ENCODE measurements at regions of chr4 and their contacts with region 1.

Region 1: GRCh38 chr4:184649026-184649970 is at the starts of genes CASP3 and PRIMPOL:
- DNase-seq: peak; percentile 93 to 95
- ATAC-seq: peak; percentile 80 to 86
- H3K4me3 ChIP-seq: peak within 1 kb of the TSS; percentile 66 to 98 (median 82)
- H3K27ac ChIP-seq: peak within 1 kb of the TSS; percentile 89 to 100 (median 98)
- H3K4me1 ChIP-seq: peaks cover 46 to 54% of the 10 kb centered on the region in 2 donors
- H3K27me3 ChIP-seq: no peaks in the 10 kb centered on the region
- CTCF ChIP-seq: peak in 2 of 5 experiments; percentile 29 to 45
- POLR2A ChIP-seq: peak; percentile 86 to 92
- total RNA-seq, gene CASP3: 16.9 to 25.5 (median 20.8) TPM
- total RNA-seq, gene PRIMPOL: 5.9 to 11.1 (median 10.7) TPM

Region 2: GRCh38 chr4:184237612-184238011 is 411.7 kb before region 1 on chr4:
- in situ Hi-C with region 1: no loop called
- intact Hi-C with region 1: no loop called
- DNase-seq: no peak
- ATAC-seq: no peak
- H3K4me3 ChIP-seq: no peak overlapping the region
- H3K27ac ChIP-seq: no peak overlapping the region
- H3K4me1 ChIP-seq: no peaks in the 10 kb centered on the region
- H3K27me3 ChIP-seq: peaks cover 0 to 2% (median 0%) of the 10 kb centered on the region in 3 donors
- CTCF ChIP-seq: no peak
- POLR2A ChIP-seq: no peak

Region 3: DNA sequence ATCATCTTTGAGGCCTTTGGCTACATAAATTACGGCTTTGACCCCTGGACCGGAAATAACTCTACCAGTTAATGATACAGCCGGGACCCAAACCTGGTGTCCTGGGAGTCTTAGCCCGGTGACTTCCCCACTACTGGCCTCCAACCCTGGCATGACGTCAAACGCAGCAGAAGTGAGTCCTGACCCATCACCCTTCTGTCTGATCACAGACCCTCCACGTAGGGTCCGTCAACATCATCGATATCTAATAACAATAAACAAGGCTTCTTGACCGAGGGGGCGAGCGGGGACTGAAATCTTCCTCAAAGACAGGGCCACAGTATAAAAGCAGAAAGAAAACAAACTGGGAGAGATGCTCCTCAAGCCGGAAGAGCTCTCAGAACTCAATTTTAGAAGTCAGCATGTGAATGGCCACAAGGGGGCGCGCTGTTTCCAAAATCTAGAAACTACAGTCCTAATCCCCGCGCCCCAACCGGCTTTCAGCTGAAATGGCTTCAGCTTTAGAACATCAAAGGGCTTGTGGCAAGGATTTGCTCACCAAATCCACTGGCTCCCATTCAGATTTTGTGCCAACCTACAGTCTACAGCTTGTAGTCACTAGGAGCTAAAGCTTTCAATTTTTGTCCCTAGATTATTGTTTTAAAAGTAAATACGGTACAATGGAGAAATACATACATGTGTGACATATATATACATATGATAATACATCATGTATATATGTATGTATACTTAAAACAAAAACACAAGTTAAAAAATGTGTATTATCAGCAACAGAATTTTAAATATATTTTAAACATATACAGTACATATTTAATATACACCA is 385.2 kb before region 1 on chr4:
- in situ Hi-C with region 1: loop called in 1 of 4 experiments (anchors 10 kb)
- intact Hi-C with region 1: loop called (anchors 10 kb)
- DNase-seq: peak; percentile 79 to 86
- ATAC-seq: peak; percentile 85 to 92
- H3K4me3 ChIP-seq: no peak overlapping the region
- H3K27ac ChIP-seq: no peak overlapping the region
- H3K4me1 ChIP-seq: no peaks in the 10 kb centered on the region
- H3K27me3 ChIP-seq: no peaks in the 10 kb centered on the region
- CTCF ChIP-seq: peak; percentile 81 to 94 (median 90)
- POLR2A ChIP-seq: no peak

Region 4: DNA sequence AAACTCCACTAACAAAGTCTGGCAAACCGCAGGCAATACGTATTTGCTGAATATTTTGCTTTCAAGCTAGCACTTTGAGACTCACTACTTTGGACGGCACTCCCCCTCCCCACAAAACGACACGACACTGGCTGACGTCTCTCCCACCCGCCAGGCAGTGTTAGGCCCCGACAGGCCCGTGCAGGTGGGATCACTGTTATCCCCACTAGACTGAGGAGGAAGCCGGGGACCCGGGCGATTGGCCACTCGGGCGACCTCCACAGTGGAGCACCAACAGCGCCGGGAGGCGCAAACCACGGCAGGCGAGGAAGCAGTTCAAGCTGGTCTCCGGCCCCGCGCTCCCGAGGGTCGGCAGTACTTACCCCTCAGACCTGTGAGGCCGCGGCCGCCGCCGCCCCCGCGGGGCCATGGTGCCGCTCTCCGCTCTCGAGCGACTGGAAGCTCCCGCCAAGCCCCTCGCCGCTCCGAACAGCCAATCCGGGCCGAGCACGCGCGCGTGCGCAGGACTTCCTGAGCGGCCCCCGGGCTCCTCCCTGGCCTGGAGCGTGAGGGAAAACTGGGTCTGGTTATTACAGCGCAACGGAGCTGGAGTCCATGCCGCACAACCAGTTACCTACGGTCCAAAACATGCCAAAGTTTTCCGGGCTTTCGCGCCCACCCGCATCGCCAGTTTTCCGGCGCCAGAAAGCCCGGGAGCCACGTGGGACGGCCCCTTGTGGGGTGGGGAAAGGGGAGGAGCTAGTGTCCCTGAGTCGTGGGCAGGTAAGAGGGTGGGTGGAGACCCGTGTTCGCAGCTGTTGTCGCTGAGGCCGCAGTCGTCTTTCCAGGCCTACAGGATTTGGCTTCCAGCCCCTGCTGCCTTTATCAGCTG is 84.6 kb after region 1 on chr4 and contains the start of gene CENPU:
- in situ Hi-C with region 1: no loop called
- intact Hi-C with region 1: loop called (anchors 1 kb)
- DNase-seq: peak; percentile 92 to 97
- ATAC-seq: peak; percentile 98 to 99
- H3K4me3 ChIP-seq: peak within 1 kb of the TSS; percentile 64 to 89 (median 80)
- H3K27ac ChIP-seq: peak within 1 kb of the TSS; percentile 73 to 81 (median 76)
- H3K4me1 ChIP-seq: peaks cover 11 to 12% of the 10 kb centered on the region in 2 donors
- H3K27me3 ChIP-seq: no peaks in the 10 kb centered on the region
- CTCF ChIP-seq: peak in 2 of 5 experiments; percentile 31 to 51
- POLR2A ChIP-seq: peak; percentile 9 to 20
- total RNA-seq, gene CENPU: 0.75 to 2.7 (median 2.2) TPM in 3 of 4 donors, not detected in the other

Region 5: DNA sequence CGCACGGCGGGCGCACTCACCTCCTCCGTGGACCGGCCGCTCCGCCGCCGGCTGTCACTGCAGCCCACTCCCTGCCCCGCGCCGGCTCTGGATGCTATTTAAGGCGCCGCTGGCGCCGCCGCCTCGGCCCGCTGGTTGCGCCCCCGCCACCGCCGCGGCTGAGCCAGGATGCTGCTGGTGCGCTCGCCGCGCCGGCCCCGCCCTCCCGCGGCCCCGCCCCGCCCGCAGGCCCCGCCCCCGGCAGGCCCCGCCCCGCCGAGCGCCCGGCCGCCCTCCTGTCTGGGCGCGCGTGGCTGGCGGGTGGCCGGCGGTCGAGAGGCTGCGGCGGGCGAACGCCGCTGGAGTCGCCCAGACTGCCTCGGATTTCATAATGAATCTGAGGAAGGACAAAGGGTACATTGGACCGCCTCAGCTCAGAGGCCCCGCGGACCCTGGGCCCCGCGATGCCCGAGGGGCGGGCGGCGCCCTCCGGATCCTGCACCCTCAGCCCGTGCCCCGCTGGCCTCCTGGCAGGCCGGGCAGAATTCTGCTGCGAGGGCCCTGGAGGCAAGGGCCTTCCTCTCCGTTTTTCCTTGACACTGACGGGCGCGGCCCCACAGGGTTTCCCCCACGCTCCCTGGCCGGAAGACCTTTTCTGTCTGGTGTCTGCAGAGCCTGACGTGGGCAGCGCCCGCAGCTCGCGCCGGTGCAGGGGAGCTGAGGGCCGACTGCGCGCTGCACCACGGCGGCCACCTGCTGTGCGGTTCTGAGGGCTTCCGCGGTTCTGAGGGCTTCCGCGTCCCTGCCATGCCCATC is 176.8 kb after region 1 on chr4 and contains the start of gene ACSL1:
- in situ Hi-C with region 1: no loop called
- intact Hi-C with region 1: loop called (anchors 1 kb)
- DNase-seq: peak; percentile 80 to 91
- ATAC-seq: peak; percentile 74 to 76
- H3K4me3 ChIP-seq: peak within 1 kb of the TSS; percentile 64 to 91 (median 73)
- H3K27ac ChIP-seq: peak within 1 kb of the TSS; percentile 97 to 100 (median 98)
- H3K4me1 ChIP-seq: peaks cover 36 to 42% of the 10 kb centered on the region in 2 donors
- H3K27me3 ChIP-seq: no peaks in the 10 kb centered on the region
- CTCF ChIP-seq: no peak
- POLR2A ChIP-seq: peak; percentile 99
- total RNA-seq, gene ACSL1: 591 to 2,181 (median 1,316) TPM

Region 6: DNA sequence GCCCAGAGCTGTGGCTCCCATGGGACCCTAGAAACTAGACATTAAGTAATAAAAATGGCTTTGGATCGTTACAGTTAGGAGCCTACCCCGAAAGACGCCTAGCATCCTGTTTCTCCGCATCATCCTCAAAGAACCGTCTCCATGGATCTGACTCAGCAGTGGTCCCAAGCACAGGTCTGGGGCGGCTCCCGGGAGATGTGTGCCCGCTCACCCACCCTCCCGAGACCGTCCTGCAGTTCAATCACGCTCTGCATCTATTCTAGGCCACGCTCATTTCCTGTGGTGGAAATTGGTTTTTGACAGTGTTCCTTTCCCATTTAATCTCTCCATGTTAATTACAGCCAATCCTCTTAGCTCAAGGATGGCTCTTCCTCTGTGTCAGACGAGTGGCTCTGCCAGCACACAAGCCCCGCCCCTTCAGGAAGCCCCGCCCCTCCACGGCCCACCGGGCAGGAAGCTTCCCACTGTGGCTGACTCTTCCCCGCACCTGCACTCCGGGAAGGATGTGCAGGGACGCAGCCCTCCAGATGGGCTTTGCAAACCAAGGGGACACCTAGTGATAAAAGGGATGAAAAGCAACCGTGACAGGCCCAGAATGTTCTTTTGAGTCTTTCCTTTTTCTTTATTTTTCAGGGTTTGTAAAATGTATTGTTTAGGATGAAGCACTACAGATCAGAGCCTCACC is 334.5 kb after region 1 on chr4:
- in situ Hi-C with region 1: no loop called
- intact Hi-C with region 1: loop called (anchors 10 kb)
- DNase-seq: peak; percentile 6 to 44
- ATAC-seq: peak in 1 of 2 donors; percentile 62
- H3K4me3 ChIP-seq: no peak overlapping the region
- H3K27ac ChIP-seq: no peak overlapping the region
- H3K4me1 ChIP-seq: no peaks in the 10 kb centered on the region
- H3K27me3 ChIP-seq: no peaks in the 10 kb centered on the region
- CTCF ChIP-seq: peak in 4 of 5 experiments; percentile 21 to 43 (median 33)
- POLR2A ChIP-seq: no peak

Region 7: GRCh38 chr4:185203486-185204237 is 554.4 kb after region 1 on chr4 and contains the start of gene CFAP97:
- in situ Hi-C with region 1: no loop called
- intact Hi-C with region 1: loop called (anchors 5 kb)
- DNase-seq: peak; percentile 70 to 79
- ATAC-seq: peak; percentile 87 to 89
- H3K4me3 ChIP-seq: peak within 1 kb of the TSS; percentile 63 to 87 (median 74)
- H3K27ac ChIP-seq: peak within 1 kb of the TSS; percentile 85 to 99 (median 97)
- H3K4me1 ChIP-seq: peaks cover 10 to 25% of the 10 kb centered on the region in 2 donors
- H3K27me3 ChIP-seq: no peaks in the 10 kb centered on the region
- CTCF ChIP-seq: peak in 2 of 5 experiments; percentile 10 to 13
- POLR2A ChIP-seq: peak; percentile 84 to 87
- total RNA-seq, gene CFAP97: 6.5 to 14.1 (median 10.8) TPM

Region 8: GRCh38 chr4:186191200-186192065 is 1542.1 kb after region 1 on chr4 and contains the start of gene CYP4V2:
- in situ Hi-C with region 1: no loop called
- intact Hi-C with region 1: loop called (anchors 5 kb)
- DNase-seq: peak; percentile 49 to 62
- ATAC-seq: peak; percentile 85
- H3K4me3 ChIP-seq: peak within 1 kb of the TSS; percentile 74 to 96 (median 81)
- H3K27ac ChIP-seq: peak within 1 kb of the TSS; percentile 84 to 96 (median 90)
- H3K4me1 ChIP-seq: peaks cover 22 to 27% of the 10 kb centered on the region in 2 donors
- H3K27me3 ChIP-seq: no peaks in the 10 kb centered on the region
- CTCF ChIP-seq: peak in 1 of 5 experiments; percentile 45
- POLR2A ChIP-seq: peak; percentile 32 to 47
- total RNA-seq, gene CYP4V2: 2.9 to 11.0 (median 6.1) TPM